CD4-positive, alpha-beta T cell (primary cell): ENCODE measurements at regions of chr17 and their contacts with region 1.

Region 1: GRCh38 chr17:79839363-79840268 is at the start of gene CBX4:
- DNase-seq: peak; percentile 84 to 96 (median 92)
- ATAC-seq: peak; percentile 73
- H3K4me3 ChIP-seq: peak within 1 kb of the TSS; percentile 98
- H3K4me3 Mint-ChIP-seq: peak within 1 kb of the TSS; percentile 98
- H3K27ac ChIP-seq: peak within 1 kb of the TSS; percentile 58 to 75
- H3K27ac Mint-ChIP-seq: peak within 1 kb of the TSS; percentile 99
- H3K4me1 ChIP-seq: peaks cover 86% of the 10 kb centered on the region
- H3K4me1 Mint-ChIP-seq: peaks cover 48% of the 10 kb centered on the region
- H3K27me3 ChIP-seq: peaks cover 37 to 47% of the 10 kb centered on the region in 2 experiments
- H3K27me3 Mint-ChIP-seq: peaks cover 38% of the 10 kb centered on the region
- CTCF ChIP-seq: peak; percentile 67
- total RNA-seq, gene CBX4: 196 to 202 TPM

Region 2: DNA sequence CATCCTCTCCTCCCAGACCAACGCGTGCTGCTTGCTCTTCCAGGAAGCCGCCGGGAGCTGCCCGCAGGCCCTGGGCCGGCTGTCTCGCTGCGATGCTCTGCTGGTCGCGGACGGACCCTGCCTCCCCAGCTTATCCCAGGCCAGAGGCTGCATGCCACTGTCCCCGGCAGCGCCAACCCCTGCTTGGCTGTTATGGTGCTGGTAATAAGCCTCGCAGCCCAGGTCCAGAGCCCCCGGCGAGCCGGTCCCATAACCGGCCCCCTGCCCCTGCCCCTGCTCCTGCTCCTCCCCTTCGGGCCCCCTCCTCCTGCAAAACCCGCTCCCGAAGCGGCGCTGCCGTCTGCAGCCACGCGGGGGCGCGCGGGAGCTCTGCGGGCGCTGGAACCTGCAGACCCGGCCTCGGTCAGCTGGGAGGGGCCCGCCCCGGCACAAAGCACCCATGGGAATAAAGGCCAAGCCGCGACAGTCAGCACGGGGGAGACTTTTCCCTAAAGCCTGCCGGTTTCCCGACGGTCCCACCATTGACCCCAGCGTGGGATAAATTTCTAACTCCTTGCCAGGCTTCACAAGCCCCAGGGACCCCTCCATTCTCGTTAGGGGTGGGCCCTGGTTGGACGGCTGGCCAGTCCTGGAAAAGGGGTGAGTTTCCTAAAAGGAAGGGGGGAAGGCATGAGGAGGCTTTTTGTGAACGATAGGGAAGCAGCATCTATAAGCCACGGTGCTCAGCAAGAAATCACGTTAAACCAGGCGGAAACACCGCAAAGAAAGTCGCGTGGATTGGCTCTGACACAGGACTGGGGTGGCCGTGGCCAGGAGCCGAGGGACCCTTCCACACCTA is 97.6 kb before region 1 on chr17:
- CTCF ChIA-PET with region 1: interaction called, 10 read pairs
- POLR2A ChIA-PET with region 1: interaction called, 14 read pairs
- intact Hi-C with region 1: loop called (anchors 1 kb)
- DNase-seq: peak; percentile 59 to 85 (median 70)
- ATAC-seq: peak; percentile 55
- H3K4me3 ChIP-seq: no peak overlapping the region
- H3K4me3 Mint-ChIP-seq: no peak overlapping the region
- H3K27ac ChIP-seq: no peak overlapping the region
- H3K27ac Mint-ChIP-seq: no peak overlapping the region
- H3K4me1 ChIP-seq: peaks cover 29% of the 10 kb centered on the region
- H3K4me1 Mint-ChIP-seq: peaks cover 14% of the 10 kb centered on the region
- H3K27me3 ChIP-seq: peaks cover 29 to 30% of the 10 kb centered on the region in 2 experiments
- H3K27me3 Mint-ChIP-seq: peaks cover 54% of the 10 kb centered on the region
- CTCF ChIP-seq: peak; percentile 94

Region 3: GRCh38 chr17:79789534-79790353 is 49.9 kb before region 1 on chr17:
- CTCF ChIA-PET with region 1: interaction called, 7 read pairs
- POLR2A ChIA-PET with region 1: interaction called, 4 read pairs
- intact Hi-C with region 1: loop called in 1 of 2 experiments (anchors 2 kb)
- DNase-seq: peak in 3 of 14 experiments; percentile 48 to 60 (median 56)
- ATAC-seq: peak; percentile 16
- H3K4me3 ChIP-seq: no peak overlapping the region
- H3K4me3 Mint-ChIP-seq: no peak overlapping the region
- H3K27ac ChIP-seq: no peak overlapping the region
- H3K27ac Mint-ChIP-seq: no peak overlapping the region
- H3K4me1 ChIP-seq: peaks cover 32% of the 10 kb centered on the region
- H3K4me1 Mint-ChIP-seq: peaks cover 9% of the 10 kb centered on the region
- H3K27me3 ChIP-seq: peaks cover 63 to 80% of the 10 kb centered on the region in 2 experiments
- H3K27me3 Mint-ChIP-seq: peaks cover 70% of the 10 kb centered on the region
- CTCF ChIP-seq: peak; percentile 81

Region 4: DNA sequence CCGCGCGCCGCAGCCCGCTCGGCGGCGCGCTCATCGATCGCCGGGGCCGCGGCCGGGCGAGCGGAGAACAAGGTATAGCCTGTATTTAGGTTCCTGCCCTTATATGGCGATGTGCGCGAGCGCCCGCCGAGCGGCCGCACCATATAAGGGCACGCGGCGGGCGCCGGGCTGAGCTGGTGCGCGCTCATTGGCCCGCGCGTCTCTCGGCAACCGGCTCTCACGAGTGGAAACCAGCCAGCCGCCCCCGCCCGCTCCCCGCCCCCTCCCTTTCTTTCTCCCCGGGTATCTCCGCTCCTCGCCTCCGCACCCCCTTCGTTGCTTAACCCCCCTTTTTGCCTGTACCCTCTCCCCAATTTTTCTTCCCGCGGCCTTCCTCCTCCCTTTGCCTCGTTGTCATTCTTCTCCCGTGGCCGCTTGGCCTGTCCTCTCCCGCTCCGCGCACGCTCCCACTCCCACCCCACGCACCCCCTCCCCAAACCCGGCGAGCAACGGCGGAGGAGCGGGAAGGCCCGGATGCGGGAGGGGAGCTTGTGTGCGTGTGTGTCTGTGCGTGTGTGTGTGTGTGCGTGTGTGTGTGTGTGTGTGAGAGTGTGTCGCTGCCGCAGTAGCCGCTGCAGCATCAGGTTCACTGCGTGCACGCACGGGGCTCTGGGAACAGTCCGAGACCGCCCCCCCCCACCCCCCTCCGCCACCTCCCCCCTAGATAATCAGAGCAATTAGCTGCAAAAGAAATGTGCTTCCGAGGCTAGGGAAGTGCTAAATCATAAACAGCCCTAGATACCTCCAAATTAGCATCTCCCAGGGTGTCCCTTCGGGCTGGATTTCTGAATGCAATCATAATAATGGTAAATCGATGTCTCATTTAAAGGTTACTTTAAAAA is 29.2 kb before region 1 on chr17:
- CTCF ChIA-PET with region 1: interaction called, 15 read pairs
- POLR2A ChIA-PET with region 1: interaction called, 127 read pairs
- intact Hi-C with region 1: loop called in 1 of 2 experiments (anchors 2 kb)
- DNase-seq: peak; percentile 48 to 93 (median 74)
- ATAC-seq: peak; percentile 92
- H3K4me3 ChIP-seq: no peak overlapping the region
- H3K4me3 Mint-ChIP-seq: peak overlapping the region; percentile 62
- H3K27ac ChIP-seq: no peak overlapping the region
- H3K27ac Mint-ChIP-seq: no peak overlapping the region
- H3K4me1 ChIP-seq: peaks cover 65% of the 10 kb centered on the region
- H3K4me1 Mint-ChIP-seq: peaks cover 36% of the 10 kb centered on the region
- H3K27me3 ChIP-seq: peaks cover 81 to 83% of the 10 kb centered on the region in 2 experiments
- H3K27me3 Mint-ChIP-seq: peaks cover 77% of the 10 kb centered on the region
- CTCF ChIP-seq: no peak

Region 5: DNA sequence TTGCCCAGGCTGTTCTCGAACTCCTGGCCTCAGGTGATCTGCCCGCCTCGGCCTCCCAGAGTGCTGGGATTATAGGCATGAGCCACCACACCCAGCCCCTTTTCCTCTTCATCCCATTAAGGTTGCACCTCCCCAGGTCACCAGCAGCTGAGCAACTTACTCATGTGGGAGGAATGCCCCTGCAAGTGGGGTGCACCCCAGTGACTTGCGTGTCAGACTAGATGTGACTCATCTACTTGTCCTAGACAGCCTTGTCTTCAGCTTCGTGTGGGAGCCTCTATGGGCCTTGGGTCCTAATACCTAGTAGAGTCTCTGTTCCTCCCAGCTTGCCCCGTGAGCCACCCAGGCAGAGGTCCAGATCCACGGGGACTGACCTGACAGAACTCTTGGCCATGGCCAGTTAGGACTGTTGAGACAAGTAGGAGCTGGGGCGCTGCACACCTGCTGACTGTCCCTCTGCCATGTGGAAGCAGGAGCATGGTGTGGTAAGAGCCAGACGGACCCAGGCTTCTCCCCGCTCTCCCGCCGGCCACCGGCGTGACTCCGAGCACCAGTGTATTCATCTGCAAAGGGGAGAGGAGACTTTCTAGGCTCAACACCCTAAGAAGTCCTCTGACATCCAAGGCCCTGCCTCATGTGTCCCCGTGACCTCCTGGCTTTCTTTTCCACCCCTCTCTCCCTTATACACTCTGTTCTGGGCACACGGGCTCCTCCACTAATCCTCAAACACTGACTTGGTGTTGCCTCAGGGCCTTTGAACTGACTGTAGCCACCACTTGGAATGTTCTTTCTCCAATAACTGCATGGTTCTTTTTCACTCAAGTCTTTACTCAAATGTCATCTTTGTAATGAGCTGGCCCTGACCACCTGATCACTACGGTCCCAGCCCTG is 11.2 kb after region 1 on chr17:
- CTCF ChIA-PET with region 1: interaction called, 14 read pairs
- POLR2A ChIA-PET with region 1: interaction called, 11 read pairs
- intact Hi-C with region 1: no loop called
- DNase-seq: peak in 1 of 14 experiments; percentile 43
- ATAC-seq: no peak
- H3K4me3 ChIP-seq: no peak overlapping the region
- H3K4me3 Mint-ChIP-seq: no peak overlapping the region
- H3K27ac ChIP-seq: no peak overlapping the region
- H3K27ac Mint-ChIP-seq: no peak overlapping the region
- H3K4me1 ChIP-seq: peaks cover 8% of the 10 kb centered on the region
- H3K4me1 Mint-ChIP-seq: peaks cover 4% of the 10 kb centered on the region
- H3K27me3 ChIP-seq: peaks cover 0 to 6% of the 10 kb centered on the region in 2 experiments
- H3K27me3 Mint-ChIP-seq: peaks cover 25% of the 10 kb centered on the region
- CTCF ChIP-seq: no peak

Region 6: DNA sequence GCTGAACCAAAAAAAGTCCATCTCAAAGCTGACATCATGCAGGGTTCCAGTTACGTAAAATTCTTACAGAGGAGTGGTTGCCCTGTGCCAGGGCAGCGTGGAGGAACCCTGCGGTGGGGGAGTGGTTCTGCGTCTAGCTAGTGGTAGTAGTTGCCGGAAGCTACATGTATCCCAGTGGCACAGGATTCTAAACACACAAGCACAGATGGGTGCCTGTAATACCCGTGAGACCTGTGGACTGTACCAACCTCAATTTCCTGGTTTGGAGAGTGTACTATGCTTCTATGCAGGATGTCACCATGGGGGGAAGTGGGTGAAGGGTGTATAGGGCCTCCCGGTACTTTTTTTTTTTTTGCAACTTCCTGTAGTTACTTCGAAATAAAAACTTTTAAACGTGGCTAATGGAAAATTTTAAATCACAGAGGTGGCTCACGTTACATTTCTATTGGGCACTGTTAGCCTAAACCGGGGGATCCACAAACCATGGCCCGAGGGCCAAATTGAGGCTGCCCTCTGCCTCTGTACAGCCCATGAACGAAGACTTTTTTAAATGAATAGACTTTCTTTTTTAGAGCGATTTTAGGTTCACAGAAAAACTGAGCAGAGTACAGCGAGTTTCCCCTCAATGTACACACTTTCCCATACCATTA is 157.5 kb after region 1 on chr17:
- CTCF ChIA-PET with region 1: interaction called, 4 read pairs
- POLR2A ChIA-PET with region 1: interaction called, 12 read pairs
- intact Hi-C with region 1: no loop called
- DNase-seq: peak; percentile 45 to 98 (median 66)
- ATAC-seq: peak; percentile 95
- H3K4me3 ChIP-seq: peak overlapping the region; percentile 41
- H3K4me3 Mint-ChIP-seq: peak overlapping the region; percentile 85
- H3K27ac ChIP-seq: peak overlapping the region; percentile 76 to 93
- H3K27ac Mint-ChIP-seq: peak overlapping the region; percentile 87
- H3K4me1 ChIP-seq: peaks cover 58% of the 10 kb centered on the region
- H3K4me1 Mint-ChIP-seq: peaks cover 51% of the 10 kb centered on the region
- H3K27me3 ChIP-seq: no peaks in the 10 kb centered on the region
- H3K27me3 Mint-ChIP-seq: no peaks in the 10 kb centered on the region
- CTCF ChIP-seq: no peak